ENCODE measurements at regions of chr12 and their contacts with region 1.

Region 1: DNA sequence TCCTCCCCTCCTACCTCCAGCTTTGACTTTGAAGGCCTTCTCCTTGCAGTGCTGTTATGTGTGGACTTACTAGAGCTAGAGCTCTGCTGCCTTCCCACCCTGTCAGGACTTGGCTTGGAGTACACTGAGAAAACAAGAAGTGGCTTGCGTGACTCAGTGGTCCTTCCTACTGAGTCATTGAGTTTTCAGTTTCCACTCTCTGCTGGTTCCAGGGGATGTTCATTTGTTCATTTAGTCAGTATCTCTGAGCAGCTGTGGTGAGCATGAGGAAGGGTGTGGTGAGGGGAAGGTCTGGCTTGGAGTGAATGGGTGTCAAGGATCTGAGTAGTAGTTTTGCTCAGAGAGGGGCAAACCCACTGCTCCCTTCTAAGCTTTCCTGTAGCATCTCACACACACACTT is 17.2 kb upstream of the ELK3 start:
- DNase-seq: peak; percentile 63
- H3K4me3 Mint-ChIP-seq: peak overlapping the region; percentile 5
- H3K27ac Mint-ChIP-seq: peak overlapping the region; percentile 87
- H3K4me1 Mint-ChIP-seq: peaks cover 27% of the 10 kb centered on the region
- H3K27me3 Mint-ChIP-seq: no peaks in the 10 kb centered on the region

Region 2: DNA sequence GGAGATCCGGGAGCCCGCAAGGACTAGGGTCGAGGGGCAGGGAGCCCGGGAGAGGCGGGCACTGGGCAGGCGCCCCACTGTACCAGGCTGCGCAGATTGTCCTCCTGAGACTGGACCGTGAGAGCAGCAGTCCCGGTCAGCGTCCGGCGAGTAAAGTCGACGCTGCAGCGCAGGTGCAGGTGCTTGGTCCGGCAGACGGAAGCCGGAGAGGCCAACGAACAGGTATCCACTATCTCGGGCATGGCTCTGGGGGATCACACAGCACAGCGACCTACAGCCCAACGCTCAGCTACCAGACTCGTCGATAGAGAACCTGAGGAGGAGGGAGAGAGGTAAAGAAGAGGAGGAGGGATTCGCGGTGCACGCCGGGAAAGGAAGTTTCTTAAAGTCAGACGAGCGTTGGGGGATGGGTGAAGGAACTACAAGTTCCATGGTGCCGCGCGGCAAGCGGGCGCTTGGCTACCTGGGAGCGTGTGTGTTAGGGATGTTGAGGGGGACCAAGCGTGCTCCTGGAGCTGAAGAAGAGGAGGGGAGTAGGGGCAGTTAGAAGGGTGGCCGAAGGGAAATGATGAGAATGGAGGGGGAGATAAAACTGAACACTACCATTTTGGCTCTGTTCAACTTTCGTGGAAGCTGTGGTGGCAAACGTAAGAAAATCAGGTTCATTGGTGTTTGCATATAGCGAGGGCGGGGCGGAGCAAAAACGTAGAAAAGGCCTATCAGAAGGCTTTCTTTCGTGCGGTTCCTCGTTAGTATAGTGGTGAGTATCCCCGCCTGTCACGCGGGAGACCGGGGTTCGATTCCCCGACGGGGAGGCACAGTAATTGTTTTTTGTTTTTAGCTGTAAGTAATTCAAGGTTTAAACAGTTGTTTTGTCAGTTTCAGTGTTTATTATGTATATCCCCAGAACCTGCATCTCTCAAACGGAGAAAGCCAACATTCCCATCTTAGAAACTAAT is 141.5 kb before region 1 on chr12 and contains the start of gene LTA4H:
- intact Hi-C with region 1: loop called (anchors 1 kb)
- DNase-seq: peak; percentile 93
- H3K4me3 Mint-ChIP-seq: no peak within 1 kb of the TSS
- H3K27ac Mint-ChIP-seq: no peak within 1 kb of the TSS
- H3K4me1 Mint-ChIP-seq: peaks cover 10% of the 10 kb centered on the region
- H3K27me3 Mint-ChIP-seq: no peaks in the 10 kb centered on the region
- total RNA-seq, gene LTA4H: 57.3 and 59.6 TPM in 2 replicates

Region 3: DNA sequence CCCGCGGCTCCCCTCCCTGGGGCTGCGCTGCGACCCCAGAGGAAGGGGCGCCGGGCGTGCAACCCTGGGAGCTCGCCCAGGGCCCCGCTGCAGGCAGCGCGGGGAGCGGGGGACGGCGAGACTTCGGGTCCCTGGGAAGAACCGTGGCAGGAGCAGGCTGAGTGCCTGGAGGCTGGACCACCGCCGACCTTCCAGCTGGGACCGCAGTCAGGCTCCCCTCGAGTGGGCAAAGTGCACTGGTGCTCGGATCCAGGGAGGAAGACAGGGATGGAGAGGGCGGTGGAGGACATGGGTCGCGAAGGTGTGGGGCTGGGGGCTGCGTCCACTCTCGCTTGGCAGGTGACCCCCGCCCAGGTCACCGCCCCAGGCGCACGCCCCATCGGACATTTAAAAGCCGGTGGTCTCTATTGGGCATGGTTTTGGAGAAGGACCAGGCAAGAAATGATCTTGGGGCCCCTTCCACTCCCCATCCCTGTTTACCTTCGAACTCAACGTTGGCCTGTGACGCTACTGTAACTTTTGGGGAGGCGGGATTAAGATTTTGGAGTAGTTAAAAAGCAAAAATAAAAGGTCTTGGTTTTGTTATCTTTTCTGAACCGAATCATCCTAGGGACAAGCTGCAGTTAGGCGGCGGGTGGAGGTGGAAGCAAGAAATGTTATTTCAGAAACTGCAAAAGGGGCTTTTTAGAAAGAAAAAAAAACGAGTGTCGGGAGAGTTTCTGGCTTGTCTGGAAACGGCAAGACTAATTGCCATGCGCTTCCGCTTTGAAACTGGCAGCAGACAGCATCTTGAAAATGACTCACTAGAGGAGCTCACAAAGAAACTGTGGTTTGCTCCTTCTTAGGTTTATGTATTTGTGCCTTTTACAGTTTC is 18.2 kb after region 1 on chr12:
- intact Hi-C with region 1: loop called (anchors 1 kb)
- DNase-seq: peak; percentile 68
- H3K4me3 Mint-ChIP-seq: peak overlapping the region; percentile 96
- H3K27ac Mint-ChIP-seq: peak overlapping the region; percentile 98
- H3K4me1 Mint-ChIP-seq: peaks cover 49% of the 10 kb centered on the region
- H3K27me3 Mint-ChIP-seq: no peaks in the 10 kb centered on the region

Region 4: DNA sequence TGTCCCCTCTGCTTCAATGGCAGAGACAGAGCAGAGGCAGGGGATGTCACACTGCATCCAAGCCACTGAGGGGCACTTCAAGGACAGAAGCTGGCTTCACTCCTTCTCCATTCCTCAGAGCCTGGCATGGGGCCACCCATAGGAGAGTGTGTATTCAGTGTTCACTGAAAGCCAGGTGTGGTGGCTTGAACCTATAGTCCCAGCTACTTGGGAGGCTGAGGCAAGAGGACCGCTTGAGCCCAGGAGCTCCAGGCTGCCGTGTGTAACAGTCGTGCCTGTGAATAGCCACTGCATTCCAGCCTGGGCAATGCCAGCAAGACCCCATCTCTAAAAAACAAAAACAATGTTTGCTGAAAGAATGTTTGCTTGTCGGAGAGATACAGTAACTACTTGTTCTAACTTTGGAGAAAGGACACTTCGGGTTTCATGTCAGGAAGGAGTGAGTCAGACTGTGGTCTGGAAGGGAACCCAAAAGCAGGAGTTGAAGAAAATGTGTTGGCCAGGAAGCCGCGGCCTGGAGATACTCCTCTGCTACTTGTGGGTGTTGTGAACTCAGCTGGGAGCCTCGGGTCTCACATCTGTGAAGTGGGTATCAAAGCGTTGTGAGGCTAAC is 60.6 kb after region 1 on chr12:
- intact Hi-C with region 1: no loop called
- DNase-seq: peak; percentile 46
- H3K4me3 Mint-ChIP-seq: peak overlapping the region; percentile 66
- H3K27ac Mint-ChIP-seq: peak overlapping the region; percentile 82
- H3K4me1 Mint-ChIP-seq: peaks cover 70% of the 10 kb centered on the region
- H3K27me3 Mint-ChIP-seq: no peaks in the 10 kb centered on the region

Region 5: DNA sequence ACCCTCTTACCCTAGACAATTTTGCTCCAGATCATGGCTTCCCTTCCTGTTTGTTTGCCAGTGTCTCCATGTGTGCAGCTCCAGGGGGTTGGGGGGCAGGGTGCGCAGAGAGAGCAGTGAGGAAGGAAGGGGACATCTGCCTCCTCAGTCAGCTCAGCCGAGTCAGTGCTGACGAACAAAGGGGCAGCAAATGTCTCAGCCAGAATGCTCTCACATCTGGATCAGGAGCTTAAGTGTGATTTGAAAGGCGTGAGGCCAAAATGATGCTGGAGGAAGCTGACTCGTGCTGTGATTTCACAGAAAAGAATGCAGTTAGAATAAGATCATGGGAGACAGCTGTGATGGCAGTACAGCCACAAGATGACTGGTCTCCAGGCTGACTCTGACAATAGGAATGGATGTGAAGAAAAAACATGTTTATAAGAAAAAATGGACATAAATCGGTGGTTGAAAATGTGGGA is 250.3 kb after region 1 on chr12:
- intact Hi-C with region 1: loop called (anchors 1 kb)
- DNase-seq: no peak
- H3K4me3 Mint-ChIP-seq: peak overlapping the region; percentile 1
- H3K27ac Mint-ChIP-seq: peak overlapping the region; percentile 53
- H3K4me1 Mint-ChIP-seq: peaks cover 52% of the 10 kb centered on the region
- H3K27me3 Mint-ChIP-seq: peaks cover 5% of the 10 kb centered on the region

Region 6: DNA sequence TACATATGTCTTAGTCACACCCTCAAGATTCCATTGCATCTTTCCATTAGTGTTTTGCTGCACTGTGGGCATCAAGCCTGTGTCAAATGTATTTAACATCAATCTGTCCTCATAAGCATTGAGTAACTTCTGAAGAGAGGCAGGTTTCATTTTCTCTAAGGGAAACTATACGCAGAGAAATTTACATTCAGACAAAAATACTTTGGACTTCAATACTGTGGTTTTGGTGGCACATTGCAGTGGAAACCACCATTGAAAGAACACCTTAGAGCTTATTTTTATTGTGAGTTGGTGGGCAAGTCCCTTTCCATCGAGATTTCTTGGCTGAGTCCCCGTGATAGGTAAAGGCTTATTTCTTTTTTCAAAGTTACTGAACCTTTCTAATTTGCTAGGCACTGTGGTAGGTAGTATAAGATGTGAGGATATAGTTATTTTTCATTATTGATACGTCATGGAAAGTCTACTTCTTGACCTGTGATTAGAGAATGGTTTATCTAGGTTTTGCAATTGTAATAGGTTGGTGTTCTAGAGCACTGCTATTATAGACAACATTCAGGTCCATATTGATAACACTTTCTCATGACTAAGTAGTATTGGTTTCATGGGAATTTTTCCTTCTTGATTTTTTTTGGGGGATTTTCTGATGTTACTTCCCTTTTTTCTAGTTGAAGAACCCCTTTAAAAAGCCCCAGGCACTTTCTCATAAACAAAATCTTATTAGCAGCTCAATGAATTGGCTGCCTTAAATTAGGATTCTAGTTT is 394.3 kb after region 1 on chr12:
- intact Hi-C with region 1: loop called (anchors 2 kb)
- DNase-seq: no peak
- H3K4me3 Mint-ChIP-seq: peak overlapping the region; percentile 15
- H3K27ac Mint-ChIP-seq: peak overlapping the region; percentile 40
- H3K4me1 Mint-ChIP-seq: peaks cover 14% of the 10 kb centered on the region
- H3K27me3 Mint-ChIP-seq: no peaks in the 10 kb centered on the region

Measured in activated T-helper 1 cell treated with anti-CD3 and anti-CD28 coated beads, Interleukin-12 subunit alpha, Interleukin-12 subunit beta, Interleukin-2, Interleukin-4 antibody, amounts not matched to agents 30 ng/mL and 10 ng/mL and 1 ng/mL, durations not matched to agents 14 hours and 24 hours and 36 hours (primary cell).